GM10248 (cell line): ENCODE measurements at regions of chr11 and their contacts with region 1.

Region 1: GRCh38 chr11:64846998-64847666 is 2.7 kb upstream of the CDC42BPG start:
- DNase-seq: peak; percentile 88
- CTCF ChIP-seq: peak; percentile 98

Region 2: DNA sequence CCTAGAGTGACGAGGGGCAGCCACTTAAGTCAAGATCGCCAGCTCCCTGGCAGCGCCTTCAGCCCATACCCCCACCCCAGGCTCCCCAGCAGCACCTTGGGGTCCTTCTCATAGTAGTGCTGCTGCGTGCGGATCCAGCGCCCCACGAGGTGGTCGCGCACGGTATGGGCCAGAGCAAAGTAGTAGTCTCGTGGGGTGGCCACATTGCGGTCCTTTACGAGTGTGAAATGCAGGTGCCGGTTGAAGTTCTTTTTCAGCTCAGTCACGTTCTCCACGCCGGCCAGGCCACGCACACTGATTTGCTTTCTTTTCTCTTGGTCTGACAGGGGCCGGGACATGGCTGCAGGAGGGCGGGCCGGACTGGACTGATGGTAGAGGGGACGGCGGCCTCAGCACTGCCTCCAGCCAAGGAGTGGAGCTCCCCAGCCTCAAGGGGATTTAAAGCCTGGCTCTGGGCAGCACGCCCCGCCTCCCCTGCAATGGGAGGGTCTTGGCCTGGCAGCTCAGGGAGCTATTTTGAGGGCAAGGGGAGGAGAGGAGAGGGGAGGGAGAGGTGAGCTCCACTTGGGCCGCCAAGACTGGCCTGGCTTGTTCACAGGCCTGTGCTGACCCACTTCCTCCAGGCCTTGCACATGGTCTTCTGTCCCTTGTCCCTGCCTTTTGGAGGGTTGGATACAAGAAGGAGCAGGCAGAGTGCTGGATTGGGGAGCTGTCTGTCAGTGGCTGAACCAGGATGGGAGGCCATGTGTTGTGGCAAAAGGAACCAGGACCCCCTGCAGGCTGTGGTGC is 87.4 kb before region 1 on chr11 and contains the start of gene PYGM:
- CTCF ChIA-PET with region 1: no interaction called
- POLR2A ChIA-PET with region 1: no interaction called
- DNase-seq: no peak
- CTCF ChIP-seq: no peak

Region 3: DNA sequence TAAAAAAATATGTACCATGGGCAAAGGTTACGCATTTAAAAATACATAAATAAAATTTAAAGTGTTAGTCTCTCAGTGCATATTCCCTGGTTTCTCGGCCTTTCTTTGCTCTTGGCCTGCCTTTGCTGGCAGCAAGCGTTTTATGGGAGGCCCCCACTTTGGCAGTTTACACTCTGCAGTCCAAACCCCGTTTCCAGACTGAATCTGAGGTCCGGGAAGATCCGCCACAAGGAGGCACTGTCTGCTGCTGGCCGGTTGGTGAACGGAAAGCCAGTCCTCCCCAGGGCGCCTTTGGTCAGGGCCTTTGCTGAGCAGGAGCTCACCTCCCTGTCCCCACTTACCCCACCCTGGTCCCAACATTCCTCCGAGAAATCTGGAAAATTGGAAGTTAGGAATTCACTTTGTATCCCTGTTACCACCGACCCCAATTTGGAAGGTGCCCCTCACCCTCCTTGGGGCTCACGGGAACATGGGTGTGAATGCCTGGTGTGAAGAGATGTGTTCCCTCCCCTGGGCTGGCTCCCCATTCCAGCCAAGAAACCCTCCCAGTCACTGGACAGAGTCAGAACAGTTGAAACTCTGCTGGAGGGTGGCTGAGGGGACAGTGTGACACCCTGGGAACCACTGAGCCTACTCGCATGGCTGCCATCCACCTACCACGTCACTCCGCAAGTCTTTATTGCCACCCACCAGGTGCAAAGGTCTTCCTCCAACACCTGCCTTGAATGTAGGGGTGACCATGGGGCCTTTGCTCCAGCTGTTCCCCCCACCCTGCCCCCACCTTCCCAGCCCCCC is 59.4 kb before region 1 on chr11:
- CTCF ChIA-PET with region 1: interaction called, 16 read pairs
- POLR2A ChIA-PET with region 1: no interaction called
- DNase-seq: peak; percentile 76
- CTCF ChIP-seq: peak; percentile 74

Region 4: DNA sequence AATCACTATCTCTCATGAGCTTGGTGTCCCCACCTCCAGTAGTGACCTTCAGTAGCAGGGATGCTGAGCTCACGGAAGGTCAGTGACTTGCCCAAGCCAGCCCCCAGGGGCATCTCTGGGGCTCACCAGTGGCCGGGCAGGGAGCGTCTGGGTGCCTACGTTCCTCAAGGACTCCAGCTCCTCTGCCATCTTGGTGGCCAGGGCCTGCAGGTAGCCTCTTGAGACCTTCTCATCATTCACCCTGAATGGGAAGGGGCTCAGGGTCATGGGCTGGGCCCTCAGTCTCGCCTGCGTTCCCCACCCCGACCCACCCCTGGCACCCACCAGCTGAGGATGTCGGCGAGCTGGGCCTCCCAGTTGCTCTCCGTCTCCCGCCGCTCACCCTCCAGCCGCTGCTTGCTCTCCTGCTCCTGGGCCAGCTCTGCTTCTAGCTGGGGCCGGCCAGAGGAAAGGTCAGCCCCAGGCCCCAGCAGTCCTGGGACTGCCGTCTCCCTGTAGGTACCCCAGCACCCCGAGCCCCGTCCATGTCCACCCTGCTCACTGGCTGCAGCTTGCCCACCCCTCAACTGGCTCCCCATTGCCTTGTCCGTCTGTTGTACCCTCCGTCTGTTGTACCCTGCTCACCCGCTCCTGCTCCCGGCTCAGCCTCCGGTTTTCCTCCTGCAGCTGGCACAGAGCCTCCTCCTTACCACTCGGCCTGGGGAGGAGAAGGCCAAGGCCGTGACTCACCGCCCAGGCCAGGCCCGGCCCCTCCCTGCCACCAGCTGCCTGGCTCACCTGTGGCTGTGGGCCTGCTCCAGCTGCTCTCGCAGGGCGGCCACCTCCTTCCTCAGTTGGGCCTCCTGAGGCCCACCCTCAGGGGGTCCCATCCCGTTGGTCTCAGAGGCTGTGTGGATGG is 12.2 kb before region 1 on chr11:
- CTCF ChIA-PET with region 1: interaction called, 54 read pairs
- POLR2A ChIA-PET with region 1: no interaction called
- DNase-seq: no peak
- CTCF ChIP-seq: no peak

Region 5: GRCh38 chr11:64864473-64865285 is 17.5 kb after region 1 on chr11:
- CTCF ChIA-PET with region 1: interaction called, 356 read pairs
- POLR2A ChIA-PET with region 1: interaction called, 35 read pairs
- DNase-seq: peak; percentile 66
- CTCF ChIP-seq: no peak

Region 6: GRCh38 chr11:64878494-64879243 is 31.5 kb after region 1 on chr11 and contains the start of gene EHD1:
- CTCF ChIA-PET with region 1: interaction called, 1,137 read pairs
- POLR2A ChIA-PET with region 1: interaction called, 129 read pairs
- DNase-seq: peak; percentile 100
- CTCF ChIP-seq: peak; percentile 79

Region 7: DNA sequence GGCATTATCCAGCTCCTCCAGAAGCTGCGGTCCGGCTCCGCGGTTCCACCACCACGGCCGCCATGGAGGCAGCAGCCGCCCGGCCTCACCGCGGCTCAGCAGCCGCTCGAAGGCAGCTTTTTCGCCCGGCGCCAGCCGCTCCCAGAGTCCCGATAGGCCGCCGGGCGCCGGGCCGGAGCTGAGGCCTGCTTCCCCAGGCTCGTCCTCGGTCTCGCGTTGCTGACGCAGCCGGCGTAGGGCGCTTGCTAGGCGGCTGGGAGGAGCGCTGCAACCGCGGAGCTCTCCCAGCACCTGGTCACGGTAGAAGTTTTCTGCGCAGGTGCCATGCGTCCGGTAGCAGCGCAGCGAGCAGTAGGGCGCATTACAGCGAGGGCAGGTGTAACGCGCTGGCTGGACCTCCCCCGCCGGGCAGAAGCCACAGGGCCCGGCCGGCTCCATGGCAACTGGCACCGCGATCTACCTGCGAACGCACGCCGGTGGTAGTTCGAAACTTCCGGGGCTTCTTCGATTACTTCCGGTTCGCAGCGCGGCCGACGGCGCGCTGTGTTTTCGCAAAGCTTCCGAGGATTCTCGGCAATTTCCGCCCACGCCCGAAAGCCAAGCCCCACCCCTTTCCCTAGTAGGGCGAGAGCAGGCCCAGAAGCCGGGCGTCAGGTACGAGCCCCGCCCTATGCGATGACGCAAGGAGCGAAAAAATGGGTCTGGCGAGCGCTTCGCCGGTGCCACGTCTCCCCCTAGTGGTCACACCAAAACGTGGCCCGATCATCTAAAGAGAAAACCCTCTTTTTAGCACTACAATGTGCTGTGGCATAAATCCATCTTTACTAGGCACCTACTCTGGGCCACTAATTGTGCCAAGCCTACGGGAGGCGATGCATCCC is 270.3 kb after region 1 on chr11 and contains the start of gene ZNHIT2:
- CTCF ChIA-PET with region 1: interaction called, 11 read pairs
- POLR2A ChIA-PET with region 1: interaction called, 3 read pairs
- DNase-seq: peak; percentile 95
- CTCF ChIP-seq: peak; percentile 84